HepG2 (cell line): ENCODE measurements at regions of chr14 and their contacts with region 1.

Region 1: DNA sequence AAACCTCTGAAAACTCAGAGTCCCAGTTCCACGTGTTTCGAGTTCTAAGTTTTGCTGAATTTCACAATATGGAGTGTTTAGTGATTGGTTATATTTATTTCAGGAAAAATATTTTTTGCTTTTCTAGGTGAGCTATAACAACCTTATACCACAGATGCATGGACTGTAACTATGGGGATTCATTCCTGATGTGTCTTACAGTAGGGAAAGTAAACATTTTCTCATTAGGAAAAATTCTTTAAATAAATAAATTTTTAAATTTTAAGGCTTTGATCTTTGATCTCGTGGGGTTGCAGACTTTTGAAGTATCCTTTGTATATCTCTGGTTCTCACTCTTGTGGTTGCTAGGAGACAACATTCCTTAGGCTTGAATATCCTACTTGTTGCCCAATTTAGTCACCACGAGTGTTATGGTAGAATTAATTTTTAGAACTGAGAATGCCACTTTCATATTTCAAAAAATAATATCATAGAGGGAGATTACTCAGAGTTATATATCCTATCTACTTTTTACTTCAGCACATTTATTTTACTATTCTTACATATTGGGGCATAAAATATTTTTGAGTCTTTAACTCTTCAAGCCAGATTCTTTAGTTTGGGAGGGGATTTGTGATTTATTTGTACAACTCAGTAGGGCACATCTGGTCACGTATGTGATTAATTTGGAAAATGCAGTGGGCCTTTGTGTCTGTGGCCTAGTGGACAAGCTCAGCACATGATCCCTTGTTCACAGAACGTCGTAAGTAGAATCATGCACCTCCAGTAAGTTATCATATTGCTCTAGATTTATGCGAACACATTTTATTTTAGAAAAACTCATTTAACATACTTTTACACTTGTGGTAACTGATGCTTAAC is 224.0 kb downstream of the TTC6 start:
- DNase-seq: peak; percentile 97
- ATAC-seq: peak; percentile 76
- H3K4me3 ChIP-seq: no peak overlapping the region
- H3K27ac ChIP-seq: peak overlapping the region; percentile 73
- H3K4me1 ChIP-seq: peaks cover 44% of the 10 kb centered on the region
- H3K27me3 ChIP-seq: no peaks in the 10 kb centered on the region
- CTCF ChIP-seq: no peak
- EP300 ChIP-seq: peak; percentile 74 to 92; a peak in 3 of 4 replicates
- POLR2A ChIP-seq: no peak
- RAD21 ChIP-seq: no peak

Region 2: GRCh38 chr14:37848985-37849621 is 29.7 kb after region 1 on chr14:
- CTCF ChIA-PET with region 1: no interaction called
- POLR2A ChIA-PET with region 1: no interaction called
- in situ Hi-C with region 1: no loop called
- intact Hi-C with region 1: loop called (anchors 2 kb)
- DNase-seq: peak; percentile 86
- ATAC-seq: peak; percentile 74
- H3K4me3 ChIP-seq: no peak overlapping the region
- H3K27ac ChIP-seq: no peak overlapping the region
- H3K4me1 ChIP-seq: peaks cover 39% of the 10 kb centered on the region
- H3K27me3 ChIP-seq: no peaks in the 10 kb centered on the region
- CTCF ChIP-seq: no peak
- EP300 ChIP-seq: peak in 1 of 2 experiments; percentile 82; a peak in 2 of 4 replicates
- POLR2A ChIP-seq: no peak
- RAD21 ChIP-seq: no peak